ENCODE measurements at regions of chr7 and their contacts with region 1.

Region 1: DNA sequence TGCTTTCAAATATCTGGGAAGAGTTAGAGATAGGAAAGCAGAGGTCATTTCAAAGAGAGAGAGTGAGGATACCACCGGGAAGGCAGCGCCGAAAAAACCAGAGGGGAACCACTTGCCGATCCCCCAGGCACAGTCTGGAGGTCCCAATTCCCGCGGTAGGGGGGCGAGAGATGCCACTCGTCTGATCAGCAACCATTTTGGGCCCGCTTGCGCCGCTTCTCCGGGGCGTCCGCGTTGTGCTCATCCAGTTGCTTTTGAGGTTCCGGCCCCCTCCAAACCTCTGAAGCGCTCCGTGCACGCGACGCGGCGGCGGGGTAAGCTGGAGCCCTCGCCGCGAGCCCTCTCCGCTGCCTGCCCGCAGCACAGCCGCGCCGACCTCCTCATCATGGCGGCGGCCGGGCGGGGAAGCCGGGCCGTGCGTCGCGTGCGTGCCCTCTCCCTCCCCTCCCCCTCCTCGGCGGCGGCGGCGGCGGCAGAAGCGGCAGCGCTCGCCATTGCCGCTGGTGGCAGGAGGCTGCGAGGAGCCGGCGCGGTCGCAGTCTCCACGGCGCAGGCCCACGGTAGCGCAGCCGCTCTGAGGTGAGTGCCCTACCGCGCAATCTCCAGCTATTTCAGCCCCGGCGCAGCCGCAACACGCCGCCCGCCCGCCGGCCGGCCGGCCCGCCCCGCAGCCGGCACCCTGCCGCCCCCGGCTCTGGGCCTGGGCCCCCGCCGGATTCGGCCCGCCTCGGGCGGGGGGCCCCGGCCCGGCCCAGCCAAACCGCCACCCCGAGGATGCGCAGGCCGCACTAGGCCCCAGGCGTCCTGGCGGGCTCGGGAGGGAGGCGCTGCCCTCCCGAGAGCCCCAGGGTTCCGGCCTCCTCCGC is at the start of gene NRF1:
- DNase-seq: peak; percentile 89 to 97 (median 94)
- ATAC-seq: peak; percentile 92
- H3K4me3 ChIP-seq: peak within 1 kb of the TSS; percentile 87
- H3K4me3 Mint-ChIP-seq: peak within 1 kb of the TSS; percentile 88 to 99 (median 96)
- H3K27ac ChIP-seq: peak within 1 kb of the TSS; percentile 82
- H3K27ac Mint-ChIP-seq: peak within 1 kb of the TSS; percentile 92 to 99 (median 96)
- H3K4me1 ChIP-seq: peaks cover 24 to 38% of the 10 kb centered on the region in 2 donors
- H3K4me1 Mint-ChIP-seq: peaks cover 37 to 79% (median 67%) of the 10 kb centered on the region in 7 donors
- H3K27me3 ChIP-seq: no peaks in the 10 kb centered on the region
- H3K27me3 Mint-ChIP-seq: no peaks in the 10 kb centered on the region
- total RNA-seq, gene NRF1: 25.8 to 49.3 (median 35.3) TPM

Region 2: GRCh38 chr7:129176916-129177710 is 434.4 kb before region 1 on chr7:
- CTCF ChIA-PET with region 1: no interaction called
- POLR2A ChIA-PET with region 1: no interaction called
- intact Hi-C with region 1: no loop called
- DNase-seq: no peak
- ATAC-seq: no peak
- H3K4me3 ChIP-seq: no peak overlapping the region
- H3K4me3 Mint-ChIP-seq: no peak overlapping the region
- H3K27ac ChIP-seq: no peak overlapping the region
- H3K27ac Mint-ChIP-seq: no peak overlapping the region
- H3K4me1 ChIP-seq: no peaks in the 10 kb centered on the region
- H3K4me1 Mint-ChIP-seq: peaks cover 0 to 1% (median 0%) of the 10 kb centered on the region in 7 donors
- H3K27me3 ChIP-seq: no peaks in the 10 kb centered on the region
- H3K27me3 Mint-ChIP-seq: peaks cover 7 to 37% (median 9%) of the 10 kb centered on the region in 5 donors

Region 3: GRCh38 chr7:129433847-129434674 is 177.4 kb before region 1 on chr7 and contains the start of gene STRIP2:
- CTCF ChIA-PET with region 1: no interaction called
- POLR2A ChIA-PET with region 1: no interaction called
- intact Hi-C with region 1: loop called (anchors 1 kb)
- DNase-seq: peak; percentile 77 to 97 (median 86)
- ATAC-seq: peak; percentile 98
- H3K4me3 ChIP-seq: peak within 1 kb of the TSS; percentile 85
- H3K4me3 Mint-ChIP-seq: peak within 1 kb of the TSS; percentile 90 to 98 (median 93)
- H3K27ac ChIP-seq: peak within 1 kb of the TSS; percentile 52
- H3K27ac Mint-ChIP-seq: peak within 1 kb of the TSS; percentile 11 to 91 (median 69)
- H3K4me1 ChIP-seq: peaks cover 6 to 14% of the 10 kb centered on the region in 2 donors
- H3K4me1 Mint-ChIP-seq: peaks cover 9 to 43% (median 17%) of the 10 kb centered on the region in 7 donors
- H3K27me3 ChIP-seq: peaks cover 4 to 6% of the 10 kb centered on the region in 2 donors
- H3K27me3 Mint-ChIP-seq: peaks cover 8 to 34% (median 29%) of the 10 kb centered on the region in 5 donors
- total RNA-seq, gene STRIP2: 0.14 to 21.4 (median 0.27) TPM in 4 of 5 experiments, not detected in the other

Region 4: DNA sequence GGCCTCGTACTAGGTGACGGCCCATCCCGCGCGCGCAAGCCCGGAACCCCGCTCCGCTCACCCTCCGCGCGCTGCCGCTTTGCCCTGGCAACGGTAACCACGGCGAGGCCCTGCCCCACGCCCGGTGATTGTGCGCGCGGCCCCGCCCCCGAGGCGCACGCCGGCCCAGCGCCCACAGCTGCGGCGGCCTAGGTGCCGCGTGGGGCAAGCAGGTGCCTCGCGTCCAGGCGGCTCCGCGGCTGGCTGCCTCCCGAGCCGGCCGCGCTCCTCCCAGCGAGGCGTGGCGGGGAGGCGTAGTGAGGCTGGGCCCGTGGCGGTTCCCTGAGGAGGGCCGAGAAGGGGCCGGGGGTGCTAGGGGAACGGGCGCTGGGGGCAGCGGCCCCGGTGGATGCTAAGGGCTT is 109.1 kb before region 1 on chr7 and contains the start of gene SMKR1:
- CTCF ChIA-PET with region 1: no interaction called
- POLR2A ChIA-PET with region 1: no interaction called
- intact Hi-C with region 1: loop called (anchors 1 kb)
- DNase-seq: peak; percentile 86 to 94 (median 91)
- ATAC-seq: peak; percentile 98
- H3K4me3 ChIP-seq: peak within 1 kb of the TSS; percentile 64
- H3K4me3 Mint-ChIP-seq: peak within 1 kb of the TSS; percentile 75 to 91 (median 86)
- H3K27ac ChIP-seq: peak within 1 kb of the TSS; percentile 70
- H3K27ac Mint-ChIP-seq: peak within 1 kb of the TSS; percentile 70 to 93 (median 83)
- H3K4me1 ChIP-seq: peaks cover 4 to 7% of the 10 kb centered on the region in 2 donors
- H3K4me1 Mint-ChIP-seq: peaks cover 14 to 22% (median 16%) of the 10 kb centered on the region in 7 donors
- H3K27me3 ChIP-seq: no peaks in the 10 kb centered on the region
- H3K27me3 Mint-ChIP-seq: peaks cover 0 to 23% (median 0%) of the 10 kb centered on the region in 5 donors
- total RNA-seq, gene SMKR1: 1.1 to 2.5 (median 1.4) TPM

Region 5: DNA sequence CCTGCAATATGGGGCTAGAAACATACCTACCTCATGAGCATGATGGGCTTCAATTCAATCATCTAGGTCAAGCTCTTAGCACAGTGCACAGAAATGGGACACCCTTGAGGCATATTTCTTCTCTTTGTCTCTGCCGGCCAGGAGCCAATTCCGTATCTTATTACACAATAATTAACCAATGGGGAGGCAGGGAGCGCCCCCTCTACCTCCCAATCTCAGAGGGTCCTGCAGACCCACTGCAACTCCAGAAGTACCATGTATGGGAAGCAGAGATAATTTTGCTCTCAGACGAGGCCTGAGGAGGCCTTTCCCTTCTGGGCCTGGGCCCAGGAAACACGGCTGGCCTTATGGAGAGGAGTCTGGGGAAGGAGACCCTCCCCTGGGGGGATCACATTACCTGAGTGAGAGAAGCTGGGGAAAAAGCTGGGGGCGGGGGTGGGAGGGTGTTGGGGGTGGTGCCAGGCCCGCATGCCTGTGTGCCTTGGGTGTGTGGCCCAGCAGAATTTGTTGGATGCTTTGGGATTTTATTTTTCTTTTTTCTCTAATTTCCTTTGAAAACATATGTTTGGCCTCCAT is 185.8 kb after region 1 on chr7:
- CTCF ChIA-PET with region 1: no interaction called
- POLR2A ChIA-PET with region 1: no interaction called
- intact Hi-C with region 1: no loop called
- DNase-seq: no peak
- ATAC-seq: no peak
- H3K4me3 ChIP-seq: no peak overlapping the region
- H3K4me3 Mint-ChIP-seq: no peak overlapping the region
- H3K27ac ChIP-seq: no peak overlapping the region
- H3K27ac Mint-ChIP-seq: no peak overlapping the region
- H3K4me1 ChIP-seq: no peaks in the 10 kb centered on the region
- H3K4me1 Mint-ChIP-seq: no peaks in the 10 kb centered on the region
- H3K27me3 ChIP-seq: no peaks in the 10 kb centered on the region
- H3K27me3 Mint-ChIP-seq: no peaks in the 10 kb centered on the region

Region 6: GRCh38 chr7:130006771-130007170 is 395.3 kb after region 1 on chr7:
- CTCF ChIA-PET with region 1: no interaction called
- POLR2A ChIA-PET with region 1: no interaction called
- intact Hi-C with region 1: no loop called
- DNase-seq: no peak
- ATAC-seq: no peak
- H3K4me3 ChIP-seq: no peak overlapping the region
- H3K4me3 Mint-ChIP-seq: no peak overlapping the region
- H3K27ac ChIP-seq: no peak overlapping the region
- H3K27ac Mint-ChIP-seq: no peak overlapping the region
- H3K4me1 ChIP-seq: no peaks in the 10 kb centered on the region
- H3K4me1 Mint-ChIP-seq: peaks cover 0 to 9% (median 1%) of the 10 kb centered on the region in 7 donors
- H3K27me3 ChIP-seq: no peaks in the 10 kb centered on the region
- H3K27me3 Mint-ChIP-seq: peaks cover 0 to 2% (median 0%) of the 10 kb centered on the region in 5 donors

Region 7: DNA sequence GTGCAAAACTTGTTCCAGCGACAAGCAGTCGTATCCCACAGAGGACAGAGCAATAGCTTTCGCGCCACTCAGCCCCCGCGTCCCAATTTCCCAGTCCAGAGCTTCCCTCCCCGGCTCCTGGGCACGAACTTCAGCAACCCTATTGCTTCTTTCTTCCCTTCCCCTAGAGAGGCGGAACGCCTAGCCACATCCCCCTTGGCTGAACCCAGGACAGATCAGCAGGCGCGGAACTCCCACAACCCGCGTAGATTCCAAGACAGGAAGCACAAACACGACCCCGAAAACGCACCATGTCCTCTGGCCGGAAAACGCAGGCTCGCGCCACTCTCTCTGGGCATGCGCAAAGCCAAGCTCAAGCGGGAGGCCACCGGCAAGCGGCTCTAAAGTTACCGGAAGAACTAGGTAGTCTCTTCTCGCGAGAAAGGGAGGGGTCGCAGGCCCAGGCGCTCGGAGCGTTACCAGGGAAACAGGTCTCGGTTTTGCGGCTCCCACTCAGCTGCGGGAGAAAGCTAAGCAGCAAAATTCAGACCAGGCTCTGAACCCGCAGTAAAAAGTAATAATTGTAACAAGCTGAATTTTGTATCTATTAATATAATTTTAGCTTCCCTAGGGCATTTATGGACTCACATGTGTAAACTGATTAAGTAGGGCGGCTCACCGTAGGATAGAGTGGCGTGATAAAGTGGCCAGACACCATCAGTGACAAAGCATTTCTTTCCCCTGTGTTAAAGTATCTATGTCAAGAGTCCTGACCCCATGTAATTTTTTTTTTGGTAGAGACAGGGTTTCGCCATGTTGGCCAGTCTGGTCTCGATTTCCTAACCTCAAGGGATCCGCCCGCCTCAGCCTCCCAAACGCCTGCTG is 593.8 kb after region 1 on chr7 and contains the start of gene TMEM209:
- CTCF ChIA-PET with region 1: no interaction called
- POLR2A ChIA-PET with region 1: interaction called, 4 read pairs
- intact Hi-C with region 1: loop called (anchors 5 kb)
- DNase-seq: peak; percentile 80 to 96 (median 93)
- ATAC-seq: peak; percentile 98
- H3K4me3 ChIP-seq: peak within 1 kb of the TSS; percentile 89
- H3K4me3 Mint-ChIP-seq: peak within 1 kb of the TSS; percentile 98 to 100 (median 100)
- H3K27ac ChIP-seq: peak within 1 kb of the TSS; percentile 83
- H3K27ac Mint-ChIP-seq: peak within 1 kb of the TSS; percentile 97 to 100 (median 99)
- H3K4me1 ChIP-seq: peaks cover 11 to 14% of the 10 kb centered on the region in 2 donors
- H3K4me1 Mint-ChIP-seq: peaks cover 13 to 43% (median 37%) of the 10 kb centered on the region in 7 donors
- H3K27me3 ChIP-seq: no peaks in the 10 kb centered on the region
- H3K27me3 Mint-ChIP-seq: peaks cover 0 to 9% (median 0%) of the 10 kb centered on the region in 5 donors
- total RNA-seq, gene TMEM209: 18.8 to 37.3 (median 35.1) TPM

Region 8: DNA sequence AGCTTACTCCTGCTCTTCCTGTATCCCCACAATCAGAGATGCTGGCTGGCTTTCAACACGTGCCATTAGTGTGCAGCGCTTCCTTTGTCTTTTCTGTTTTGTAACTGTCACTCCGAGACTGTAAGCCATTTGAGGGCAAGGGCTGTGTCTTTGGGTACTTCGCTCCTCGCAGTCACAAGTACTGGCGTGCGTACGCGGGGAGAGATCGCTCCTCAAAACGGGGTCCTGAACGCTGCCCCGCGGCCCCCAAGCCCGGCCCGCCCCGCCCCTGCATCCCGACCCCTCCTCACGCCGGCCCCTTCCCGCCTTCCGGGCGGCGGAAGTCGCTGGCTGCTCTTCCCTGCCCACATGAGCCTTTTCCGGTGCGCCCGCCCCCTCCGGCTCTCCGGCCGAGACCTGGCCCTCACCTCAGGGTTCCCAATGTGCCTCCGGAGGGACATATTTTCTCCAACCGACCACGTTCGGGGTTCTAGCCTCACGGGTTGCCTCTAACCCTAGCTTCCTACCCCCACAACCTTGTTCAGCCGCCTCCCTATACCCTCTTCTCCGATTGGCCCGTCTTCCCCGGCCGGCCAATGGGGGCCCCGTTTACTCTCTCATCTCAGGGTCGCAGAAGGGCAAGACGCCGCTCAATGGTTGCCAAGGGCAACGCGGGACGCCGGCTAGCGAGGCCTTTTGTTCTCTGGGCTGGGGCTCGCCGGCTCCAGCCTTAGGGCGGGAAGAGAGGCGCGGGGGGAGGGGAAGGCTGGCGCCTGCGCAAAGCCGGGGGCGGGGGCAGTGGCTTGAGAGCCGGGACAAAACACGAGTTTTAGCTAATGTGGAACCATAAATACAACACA is 829.3 kb after region 1 on chr7 and contains the start of gene CEP41:
- CTCF ChIA-PET with region 1: no interaction called
- POLR2A ChIA-PET with region 1: no interaction called
- intact Hi-C with region 1: loop called in 1 of 2 experiments (anchors 5 kb)
- DNase-seq: peak; percentile 85 to 90 (median 89)
- ATAC-seq: peak; percentile 98
- H3K4me3 ChIP-seq: peak within 1 kb of the TSS; percentile 87
- H3K4me3 Mint-ChIP-seq: peak within 1 kb of the TSS; percentile 95 to 100 (median 98)
- H3K27ac ChIP-seq: peak within 1 kb of the TSS; percentile 76
- H3K27ac Mint-ChIP-seq: peak within 1 kb of the TSS; percentile 95 to 99 (median 96)
- H3K4me1 ChIP-seq: peaks cover 4 to 26% of the 10 kb centered on the region in 2 donors
- H3K4me1 Mint-ChIP-seq: peaks cover 26 to 71% (median 59%) of the 10 kb centered on the region in 7 donors
- H3K27me3 ChIP-seq: no peaks in the 10 kb centered on the region
- H3K27me3 Mint-ChIP-seq: peaks cover 0 to 4% (median 0%) of the 10 kb centered on the region in 5 donors
- total RNA-seq, gene CEP41: 6.9 to 16.0 (median 12.6) TPM